ENCODE measurements at regions of chr13 and their contacts with region 1.

Region 1: GRCh38 chr13:33228648-33229445 is 56.7 kb downstream of the STARD13 start:
- DNase-seq: peak; percentile 60
- CTCF ChIP-seq: peak; percentile 78

Region 2: DNA sequence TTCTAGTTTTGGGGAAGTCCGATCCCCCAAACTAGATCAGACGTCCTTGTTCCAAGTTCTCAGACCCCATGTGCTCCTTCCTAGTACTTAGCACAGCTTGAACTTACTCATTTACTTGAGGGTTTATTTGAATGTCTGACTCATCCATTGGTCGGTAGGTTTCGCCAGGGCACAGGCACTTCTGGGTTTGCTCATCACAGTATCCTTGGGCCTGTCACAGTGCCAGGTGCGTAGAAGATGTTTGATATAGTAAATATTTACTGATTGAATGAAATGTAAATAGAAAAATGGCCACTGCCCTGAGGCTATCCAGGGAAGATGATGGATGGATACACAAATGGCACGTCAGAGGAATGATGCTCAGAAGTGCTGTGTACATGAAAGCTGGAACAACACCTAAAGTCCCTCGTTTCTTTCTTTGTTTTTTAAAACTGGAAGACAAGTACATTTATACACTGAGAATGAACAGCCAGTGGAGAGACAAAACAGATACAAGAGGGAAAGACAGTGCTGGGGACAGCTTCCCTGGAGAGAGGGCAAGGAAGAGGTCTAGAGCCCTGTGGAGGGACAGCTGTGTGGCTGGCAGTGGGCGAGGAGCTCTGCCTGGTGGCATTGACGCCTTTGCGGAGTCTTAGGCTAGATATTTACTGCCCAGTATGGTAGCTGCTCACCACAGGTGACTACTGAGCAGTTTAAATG is 243.9 kb before region 1 on chr13:
- CTCF ChIA-PET with region 1: no interaction called
- POLR2A ChIA-PET with region 1: no interaction called
- DNase-seq: no peak
- CTCF ChIP-seq: no peak

Region 3: GRCh38 chr13:33204130-33204927 is 24.5 kb before region 1 on chr13:
- CTCF ChIA-PET with region 1: interaction called, 14 read pairs
- POLR2A ChIA-PET with region 1: no interaction called
- DNase-seq: no peak
- CTCF ChIP-seq: no peak

Region 4: GRCh38 chr13:33218001-33218400 is 10.8 kb before region 1 on chr13:
- CTCF ChIA-PET with region 1: interaction called, 18 read pairs
- POLR2A ChIA-PET with region 1: no interaction called
- DNase-seq: no peak
- CTCF ChIP-seq: no peak

Region 5: GRCh38 chr13:33244210-33244906 is 15.5 kb after region 1 on chr13:
- CTCF ChIA-PET with region 1: interaction called, 15 read pairs
- POLR2A ChIA-PET with region 1: no interaction called
- DNase-seq: no peak
- CTCF ChIP-seq: no peak